Breast epithelium (tissue), 4 donors: ENCODE measurements at regions of chr18 and their contacts with region 1.

Region 1: DNA sequence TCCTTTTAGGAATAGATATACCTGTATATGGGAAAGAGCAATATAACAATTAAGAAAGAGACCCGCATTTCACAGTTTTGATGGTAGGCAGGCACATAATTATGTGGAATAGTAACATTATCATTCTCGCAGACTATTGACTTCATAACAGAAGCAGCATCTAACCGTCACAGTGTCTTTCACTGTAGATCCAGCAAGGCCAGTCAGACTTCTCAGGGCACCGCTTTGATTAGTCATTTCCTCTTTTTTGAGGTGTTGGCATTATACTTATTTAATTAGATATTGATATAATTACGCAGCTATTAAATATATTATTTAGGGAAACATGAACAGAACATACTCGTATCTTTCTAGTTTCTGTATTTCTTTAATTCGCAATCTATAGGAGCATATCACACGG is 176.4 kb downstream of the NAPG start:
- DNase-seq: no peak
- H3K4me3 ChIP-seq: no peak overlapping the region
- H3K27ac ChIP-seq: no peak overlapping the region
- H3K4me1 ChIP-seq: no peaks in the 10 kb centered on the region
- H3K27me3 ChIP-seq: no peaks in the 10 kb centered on the region
- CTCF ChIP-seq: no peak
- POLR2A ChIP-seq: no peak

Region 2: DNA sequence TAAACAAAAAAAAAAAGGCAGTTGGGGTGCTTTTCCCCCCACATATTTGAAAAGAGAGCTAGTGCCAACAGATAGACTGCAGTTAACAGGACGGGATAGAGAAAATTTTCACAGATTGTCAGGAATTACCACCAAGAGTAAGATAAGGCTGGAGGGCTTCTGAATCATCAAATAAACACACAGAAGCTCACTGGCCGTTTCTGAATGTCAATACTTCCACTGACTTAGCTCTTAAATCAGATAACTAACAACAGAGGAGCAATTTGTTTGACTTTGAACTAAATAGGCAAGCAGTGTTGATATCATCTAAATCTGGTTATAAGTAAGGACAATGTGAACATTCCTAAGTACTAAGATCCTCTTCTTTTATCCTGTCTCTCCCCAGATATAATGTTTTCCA is 412.5 kb after region 1 on chr18:
- intact Hi-C with region 1: no loop called
- DNase-seq: no peak
- H3K4me3 ChIP-seq: no peak overlapping the region
- H3K27ac ChIP-seq: no peak overlapping the region
- H3K4me1 ChIP-seq: no peaks in the 10 kb centered on the region
- H3K27me3 ChIP-seq: no peaks in the 10 kb centered on the region
- CTCF ChIP-seq: no peak
- POLR2A ChIP-seq: no peak

Region 3: DNA sequence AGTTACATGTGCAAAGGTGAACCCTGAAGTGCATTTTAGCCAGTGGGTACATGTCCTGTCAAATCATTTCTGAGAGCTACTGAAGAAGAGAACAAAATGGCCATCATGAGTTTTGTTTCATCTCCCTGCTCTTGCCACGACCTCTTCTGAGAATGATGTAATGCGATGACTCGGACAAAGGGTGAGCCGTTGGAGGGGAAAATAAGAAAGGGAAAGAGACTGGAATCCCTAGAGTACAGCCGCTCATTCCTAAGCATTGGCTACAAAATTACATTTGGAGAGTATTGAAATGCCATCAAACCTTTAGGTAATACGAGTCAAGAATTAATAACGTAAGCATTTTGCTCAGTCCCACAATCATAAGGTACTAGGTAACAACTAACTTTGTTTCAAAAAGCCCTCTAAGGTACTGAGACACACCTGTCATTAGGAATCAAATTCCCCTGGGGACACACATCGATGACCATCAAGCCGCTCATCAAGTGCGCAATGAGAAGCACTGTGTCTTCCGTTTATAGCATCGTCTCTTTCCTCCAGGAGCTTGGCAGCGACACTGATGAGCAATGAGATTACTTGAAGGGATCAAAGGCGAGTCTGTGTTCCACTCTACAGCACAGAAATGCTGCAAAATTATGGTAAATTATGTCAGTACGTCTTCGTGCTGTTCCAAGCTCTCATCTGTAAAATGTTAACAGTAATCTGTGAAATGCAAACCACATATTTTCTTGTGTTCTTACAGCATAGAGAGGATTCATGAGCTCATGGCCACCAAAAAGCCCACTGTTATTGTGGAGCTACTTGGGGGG is 544.5 kb after region 1 on chr18:
- intact Hi-C with region 1: loop called (anchors 5 kb)
- DNase-seq: no peak
- H3K4me3 ChIP-seq: no peak overlapping the region
- H3K27ac ChIP-seq: peak overlapping the region in 1 of 2 donors; percentile 48
- H3K4me1 ChIP-seq: no peaks in the 10 kb centered on the region
- H3K27me3 ChIP-seq: no peaks in the 10 kb centered on the region
- CTCF ChIP-seq: no peak
- POLR2A ChIP-seq: no peak